Panc1 (cell line): ENCODE measurements at regions of chr5 and their contacts with region 1.

Region 1: GRCh38 chr5:171152382-171152781 is 156.7 kb upstream of the TLX3 start:
- DNase-seq: no peak
- ATAC-seq: peak; percentile 80
- H3K4me3 ChIP-seq: no peak overlapping the region
- H3K27ac ChIP-seq: no peak overlapping the region
- H3K4me1 ChIP-seq: no peaks in the 10 kb centered on the region
- H3K27me3 ChIP-seq: no peaks in the 10 kb centered on the region; the same call in none of the 2 replicates
- CTCF ChIP-seq: peak; percentile 45

Region 2: GRCh38 chr5:170880084-170880483 is 272.3 kb before region 1 on chr5:
- CTCF ChIA-PET with region 1: no interaction called
- POLR2A ChIA-PET with region 1: no interaction called
- in situ Hi-C with region 1: no loop called
- intact Hi-C with region 1: no loop called
- DNase-seq: no peak
- ATAC-seq: no peak
- H3K4me3 ChIP-seq: no peak overlapping the region
- H3K27ac ChIP-seq: no peak overlapping the region
- H3K4me1 ChIP-seq: no peaks in the 10 kb centered on the region
- H3K27me3 ChIP-seq: 0 out of 2 replicates have a peak, but pooled peaks cover 2% of the 10 kb centered on the region
- CTCF ChIP-seq: no peak

Region 3: GRCh38 chr5:170986598-170986997 is 165.8 kb before region 1 on chr5:
- CTCF ChIA-PET with region 1: no interaction called
- POLR2A ChIA-PET with region 1: no interaction called
- in situ Hi-C with region 1: no loop called
- intact Hi-C with region 1: loop called (anchors 10 kb)
- DNase-seq: no peak
- ATAC-seq: no peak
- H3K4me3 ChIP-seq: no peak overlapping the region
- H3K27ac ChIP-seq: no peak overlapping the region
- H3K4me1 ChIP-seq: no peaks in the 10 kb centered on the region
- H3K27me3 ChIP-seq: peaks cover 3% of the 10 kb centered on the region
- CTCF ChIP-seq: no peak; the same call in 1 of the 2 replicates